Heart left ventricle (tissue), 16 donors: ENCODE measurements at regions of chr3 and their contacts with region 1.

Region 1: DNA sequence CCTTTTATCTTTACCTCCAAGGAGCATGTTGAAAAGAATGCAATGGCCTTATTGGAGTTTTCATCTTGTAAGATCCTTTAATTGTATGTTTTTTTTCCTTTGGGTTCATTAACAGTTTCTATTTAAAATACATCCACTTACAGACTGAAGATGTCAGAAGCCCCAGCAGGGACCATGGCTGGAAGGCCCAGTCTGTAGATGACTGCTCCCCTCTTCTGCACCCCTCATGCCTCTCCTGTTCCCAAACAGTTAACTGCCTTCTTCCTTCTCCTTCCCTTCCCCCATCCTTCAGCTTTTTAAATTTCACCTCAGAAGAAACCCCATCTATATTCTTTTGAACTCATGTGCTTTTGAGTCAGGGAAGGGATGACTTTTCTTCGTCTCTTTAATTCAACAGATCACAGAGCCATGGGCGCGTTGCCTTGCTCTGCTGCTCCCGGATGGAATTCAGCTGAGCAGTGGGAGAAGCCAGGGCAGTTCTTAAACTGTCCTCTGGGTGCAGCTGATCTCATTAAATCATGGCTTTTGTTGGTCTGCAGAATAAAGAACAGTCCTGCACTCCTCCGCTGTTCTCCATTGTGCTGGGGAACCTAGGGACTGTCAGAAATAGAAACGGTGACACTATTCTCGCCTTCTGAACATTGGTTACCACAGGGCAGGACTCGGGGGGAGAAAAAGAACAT is 71.5 kb upstream of the EIF1B start:
- DNase-seq: peak in 4 of 5 donors; percentile 19 to 51 (median 34)
- ATAC-seq: peak; percentile 92 to 96 (median 94)
- H3K4me3 ChIP-seq: no peak overlapping the region
- H3K27ac ChIP-seq: peak overlapping the region in 10 of 12 donors; percentile 20 to 80 (median 55)
- H3K4me1 ChIP-seq: peaks cover 0 to 12% (median 0%) of the 10 kb centered on the region in 12 donors
- H3K27me3 ChIP-seq: no peaks in the 10 kb centered on the region
- CTCF ChIP-seq: peak in 10 of 12 donors; percentile 25 to 52 (median 38)
- POLR2A ChIP-seq: no peak

Region 2: DNA sequence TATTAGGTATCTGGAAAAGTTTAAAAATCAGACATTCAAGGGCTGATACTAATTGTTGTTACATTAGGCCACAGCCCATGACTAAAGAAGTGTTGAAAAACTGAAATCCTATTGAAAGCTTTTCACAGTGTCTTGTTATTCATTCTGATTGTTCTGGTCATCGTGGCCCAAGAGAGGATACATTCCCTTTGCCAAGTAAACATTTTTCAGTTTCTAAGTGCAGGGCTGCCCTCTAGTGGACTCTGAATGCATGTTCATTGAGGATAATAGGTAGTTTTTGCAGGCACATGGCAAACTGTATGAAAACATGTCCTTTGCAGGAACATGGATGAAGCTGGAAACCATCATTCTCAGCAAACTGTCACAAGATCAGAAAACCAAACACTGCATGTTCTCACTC is 247.5 kb before region 1 on chr3:
- intact Hi-C with region 1: no loop called
- DNase-seq: no peak
- ATAC-seq: no peak
- H3K4me3 ChIP-seq: no peak overlapping the region
- H3K27ac ChIP-seq: no peak overlapping the region
- H3K4me1 ChIP-seq: no peaks in the 10 kb centered on the region
- H3K27me3 ChIP-seq: peaks cover 0 to 5% (median 0%) of the 10 kb centered on the region in 9 donors
- CTCF ChIP-seq: peak in 8 of 12 donors; percentile 25 to 46 (median 38)
- POLR2A ChIP-seq: no peak

Region 3: GRCh38 chr3:40309418-40309924 is 71.4 kb after region 1 on chr3 and contains the start of gene EIF1B:
- intact Hi-C with region 1: loop called in 3 of 10 experiments (anchors 1 to 5 kb)
- DNase-seq: peak; percentile 98 to 99 (median 99)
- ATAC-seq: peak; percentile 91 to 96 (median 94)
- H3K4me3 ChIP-seq: peak within 1 kb of the TSS; percentile 71 to 96 (median 88)
- H3K27ac ChIP-seq: peak within 1 kb of the TSS; percentile 92 to 99 (median 97)
- H3K4me1 ChIP-seq: peaks cover 0 to 50% (median 32%) of the 10 kb centered on the region in 12 donors
- H3K27me3 ChIP-seq: no peaks in the 10 kb centered on the region
- CTCF ChIP-seq: peak; percentile 85 to 99 (median 94)
- POLR2A ChIP-seq: peak; percentile 48 to 99
- total RNA-seq, gene EIF1B: 64.0 to 357 (median 289) TPM